Caco-2 (cell line): ENCODE measurements at regions of chr10 and their contacts with region 1.

Region 1: GRCh38 chr10:86349474-86349873 is 17.1 kb downstream of the GRID1 start:
- DNase-seq: peak; percentile 65 to 68
- H3K4me3 ChIP-seq: no peak overlapping the region
- H3K4me3 Mint-ChIP-seq: no peak overlapping the region
- H3K27ac Mint-ChIP-seq: no peak overlapping the region
- H3K4me1 ChIP-seq: peaks cover 27% of the 10 kb centered on the region
- H3K4me1 Mint-ChIP-seq: peaks cover 14% of the 10 kb centered on the region
- H3K27me3 ChIP-seq: no peaks in the 10 kb centered on the region
- H3K27me3 Mint-ChIP-seq: no peaks in the 10 kb centered on the region
- CTCF ChIP-seq: peak; percentile 81 to 99

Region 2: GRCh38 chr10:86306628-86307278 is 42.7 kb before region 1 on chr10:
- CTCF ChIA-PET with region 1: no interaction called
- POLR2A ChIA-PET with region 1: no interaction called
- intact Hi-C with region 1: no loop called
- DNase-seq: peak in 1 of 2 experiments; percentile 56
- H3K4me3 ChIP-seq: no peak overlapping the region
- H3K4me3 Mint-ChIP-seq: no peak overlapping the region
- H3K27ac Mint-ChIP-seq: no peak overlapping the region
- H3K4me1 ChIP-seq: no peaks in the 10 kb centered on the region
- H3K4me1 Mint-ChIP-seq: no peaks in the 10 kb centered on the region
- H3K27me3 ChIP-seq: no peaks in the 10 kb centered on the region
- H3K27me3 Mint-ChIP-seq: peaks cover 15% of the 10 kb centered on the region
- CTCF ChIP-seq: no peak

Region 3: DNA sequence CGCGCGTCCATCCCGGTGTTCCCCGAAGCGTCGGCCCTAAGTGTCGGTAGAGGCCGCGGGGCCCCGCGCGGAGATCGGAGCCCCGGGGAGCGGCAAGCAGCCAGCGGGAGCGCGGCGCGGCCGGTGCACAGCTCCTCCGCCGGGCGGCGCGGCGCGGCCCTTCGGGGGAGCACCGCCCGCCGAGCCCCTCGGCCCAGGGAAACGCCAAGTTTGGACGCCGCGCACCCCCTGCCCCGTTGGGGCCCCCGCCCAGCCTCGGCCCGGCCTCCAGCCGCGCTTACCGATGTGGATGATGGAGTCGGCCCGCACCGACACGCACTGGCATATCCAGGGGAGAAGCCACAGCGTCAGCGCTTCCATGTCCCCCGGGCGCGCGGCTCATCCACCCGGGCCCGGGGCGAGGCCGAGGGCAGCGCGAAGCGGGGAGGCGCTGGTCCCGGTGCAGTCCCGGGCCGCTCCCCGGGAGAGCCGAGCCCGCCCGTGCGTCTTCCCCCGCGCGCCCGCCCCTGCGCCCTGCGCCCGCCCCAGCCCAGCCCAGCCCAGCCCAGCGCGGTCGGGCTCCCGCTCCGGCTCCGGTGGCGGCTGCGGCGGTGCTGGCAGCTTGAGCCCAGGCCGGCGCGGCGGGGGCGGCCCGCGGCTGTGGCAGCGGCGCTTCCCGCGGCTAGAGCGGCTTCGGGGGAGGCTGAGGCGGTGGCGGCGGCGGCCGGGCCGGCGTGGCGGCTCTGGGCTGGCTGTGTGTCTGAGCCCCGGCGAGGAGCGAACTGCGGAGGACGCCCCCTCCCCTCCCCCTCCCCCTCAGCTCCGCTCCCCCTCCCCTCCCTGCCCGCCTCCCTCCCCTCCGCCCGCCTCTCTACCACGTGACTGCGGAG is 16.8 kb after region 1 on chr10 and contains the start of gene GRID1:
- CTCF ChIA-PET with region 1: interaction called, 35 read pairs
- POLR2A ChIA-PET with region 1: interaction called, 3 read pairs
- intact Hi-C with region 1: loop called (anchors 1 kb)
- DNase-seq: peak; percentile 53 to 71
- H3K4me3 ChIP-seq: peak within 1 kb of the TSS; percentile 63
- H3K4me3 Mint-ChIP-seq: peak within 1 kb of the TSS; percentile 69
- H3K27ac Mint-ChIP-seq: no peak within 1 kb of the TSS
- H3K4me1 ChIP-seq: peaks cover 26% of the 10 kb centered on the region
- H3K4me1 Mint-ChIP-seq: peaks cover 9% of the 10 kb centered on the region
- H3K27me3 ChIP-seq: no peaks in the 10 kb centered on the region
- H3K27me3 Mint-ChIP-seq: peaks cover 13% of the 10 kb centered on the region
- CTCF ChIP-seq: no peak
- total RNA-seq, gene GRID1: 6.9 and 8.0 TPM in 2 replicates